ENCODE measurements at regions of chr16 and their contacts with region 1.

Region 1: GRCh38 chr16:66344533-66345145 is 21.9 kb upstream of the CDH5 start:
- DNase-seq: no peak
- ATAC-seq: no peak
- H3K4me3 ChIP-seq: no peak overlapping the region
- H3K27ac ChIP-seq: no peak overlapping the region
- H3K4me1 ChIP-seq: no peaks in the 10 kb centered on the region
- H3K27me3 ChIP-seq: no peaks in the 10 kb centered on the region; the same call in 1 of the 2 replicates
- CTCF ChIP-seq: peak; percentile 80

Region 2: GRCh38 chr16:66454751-66455150 is 110.1 kb after region 1 on chr16:
- CTCF ChIA-PET with region 1: interaction called, 11 read pairs
- POLR2A ChIA-PET with region 1: no interaction called
- in situ Hi-C with region 1: no loop called
- intact Hi-C with region 1: no loop called
- DNase-seq: no peak
- ATAC-seq: no peak
- H3K4me3 ChIP-seq: no peak overlapping the region
- H3K27ac ChIP-seq: no peak overlapping the region
- H3K4me1 ChIP-seq: no peaks in the 10 kb centered on the region
- H3K27me3 ChIP-seq: no peaks in the 10 kb centered on the region
- CTCF ChIP-seq: no peak

Measured in Panc1 (cell line).